Natural killer cell (primary cell): ENCODE measurements at regions of chr6 and their contacts with region 1.

Region 1: GRCh38 chr6:149082286-149082707 is 235.2 kb upstream of the TAB2 start:
- DNase-seq: peak; percentile 46 to 90
- ATAC-seq: peak; percentile 65 to 82 (median 81)
- H3K4me3 ChIP-seq: no peak overlapping the region
- H3K4me3 Mint-ChIP-seq: no peak overlapping the region
- H3K27ac ChIP-seq: no peak overlapping the region
- H3K27ac Mint-ChIP-seq: no peak overlapping the region
- H3K4me1 ChIP-seq: no peaks in the 10 kb centered on the region
- H3K4me1 Mint-ChIP-seq: peaks cover 0 to 4% of the 10 kb centered on the region in 2 donors
- H3K27me3 ChIP-seq: no peaks in the 10 kb centered on the region
- H3K27me3 Mint-ChIP-seq: no peaks in the 10 kb centered on the region
- CTCF ChIP-seq: peak; percentile 78

Region 2: GRCh38 chr6:148831064-148831463 is 251.2 kb before region 1 on chr6:
- intact Hi-C with region 1: no loop called
- DNase-seq: peak; percentile 19 to 67
- ATAC-seq: peak; percentile 75 to 83 (median 75)
- H3K4me3 ChIP-seq: peak overlapping the region; percentile 22
- H3K4me3 Mint-ChIP-seq: peak overlapping the region; percentile 97
- H3K27ac ChIP-seq: peak overlapping the region; percentile 15
- H3K27ac Mint-ChIP-seq: peak overlapping the region; percentile 85 to 96
- H3K4me1 ChIP-seq: peaks cover 26% of the 10 kb centered on the region
- H3K4me1 Mint-ChIP-seq: peaks cover 36 to 53% of the 10 kb centered on the region in 2 donors
- H3K27me3 ChIP-seq: no peaks in the 10 kb centered on the region
- H3K27me3 Mint-ChIP-seq: no peaks in the 10 kb centered on the region
- CTCF ChIP-seq: no peak

Region 3: DNA sequence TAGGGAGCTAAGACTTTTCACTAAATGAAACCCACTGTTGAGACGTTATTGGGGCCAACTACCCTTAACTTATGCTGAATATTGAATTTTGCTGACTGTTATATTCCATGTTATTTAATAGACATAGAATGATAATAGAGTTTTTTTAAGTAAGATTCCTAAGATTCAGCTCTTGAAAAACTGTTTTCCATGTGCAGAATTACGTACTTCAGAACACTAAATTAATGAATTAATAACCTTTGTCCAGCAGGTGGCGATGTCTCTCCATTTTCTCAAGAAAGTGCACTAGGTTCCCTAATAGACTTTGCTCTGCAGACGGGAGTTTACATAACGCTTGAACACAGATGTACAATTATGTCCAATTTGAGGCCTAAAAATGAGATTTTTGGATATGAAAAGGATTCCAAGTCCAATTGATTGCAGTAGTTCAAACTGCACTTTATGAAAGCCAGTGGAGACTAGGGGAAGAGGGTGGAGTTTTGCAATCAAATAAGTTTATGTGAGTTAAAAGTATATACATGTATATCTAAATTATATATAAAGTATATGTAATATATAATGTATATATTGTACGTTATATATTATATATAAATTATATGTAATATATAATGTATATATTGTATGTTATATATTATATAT is 53.4 kb before region 1 on chr6:
- intact Hi-C with region 1: loop called (anchors 5 kb)
- DNase-seq: peak; percentile 34 to 92
- ATAC-seq: peak; percentile 70 to 79 (median 71)
- H3K4me3 ChIP-seq: no peak overlapping the region
- H3K4me3 Mint-ChIP-seq: no peak overlapping the region
- H3K27ac ChIP-seq: no peak overlapping the region
- H3K27ac Mint-ChIP-seq: no peak overlapping the region
- H3K4me1 ChIP-seq: peaks cover 15% of the 10 kb centered on the region
- H3K4me1 Mint-ChIP-seq: peaks cover 5 to 11% of the 10 kb centered on the region in 2 donors
- H3K27me3 ChIP-seq: no peaks in the 10 kb centered on the region
- H3K27me3 Mint-ChIP-seq: no peaks in the 10 kb centered on the region
- CTCF ChIP-seq: peak; percentile 86

Region 4: DNA sequence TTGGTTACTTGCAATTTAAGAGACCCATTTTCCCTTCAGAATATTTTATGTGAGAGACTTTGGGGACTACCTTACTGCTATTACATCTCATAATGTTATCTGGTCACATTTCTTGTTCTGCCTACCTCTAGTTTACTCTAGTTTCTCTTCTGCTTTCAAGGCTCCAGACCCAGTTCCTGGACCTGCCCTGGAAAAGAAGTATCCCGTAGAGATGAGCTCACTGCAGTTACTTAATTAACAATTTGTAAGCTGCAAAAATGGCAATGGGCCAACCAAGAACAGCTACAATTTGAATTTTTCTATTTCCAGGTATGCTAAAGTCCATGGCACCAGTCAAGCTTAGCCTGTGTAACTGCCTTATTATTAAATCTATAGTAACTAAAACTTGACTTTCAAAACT is 260.2 kb after region 1 on chr6:
- intact Hi-C with region 1: no loop called
- DNase-seq: no peak
- ATAC-seq: no peak
- H3K4me3 ChIP-seq: no peak overlapping the region
- H3K4me3 Mint-ChIP-seq: no peak overlapping the region
- H3K27ac ChIP-seq: no peak overlapping the region
- H3K27ac Mint-ChIP-seq: peak overlapping the region in 1 of 2 donors; percentile 24
- H3K4me1 ChIP-seq: no peaks in the 10 kb centered on the region
- H3K4me1 Mint-ChIP-seq: peaks cover 60 to 65% of the 10 kb centered on the region in 2 donors
- H3K27me3 ChIP-seq: no peaks in the 10 kb centered on the region
- H3K27me3 Mint-ChIP-seq: no peaks in the 10 kb centered on the region
- CTCF ChIP-seq: no peak

Region 5: DNA sequence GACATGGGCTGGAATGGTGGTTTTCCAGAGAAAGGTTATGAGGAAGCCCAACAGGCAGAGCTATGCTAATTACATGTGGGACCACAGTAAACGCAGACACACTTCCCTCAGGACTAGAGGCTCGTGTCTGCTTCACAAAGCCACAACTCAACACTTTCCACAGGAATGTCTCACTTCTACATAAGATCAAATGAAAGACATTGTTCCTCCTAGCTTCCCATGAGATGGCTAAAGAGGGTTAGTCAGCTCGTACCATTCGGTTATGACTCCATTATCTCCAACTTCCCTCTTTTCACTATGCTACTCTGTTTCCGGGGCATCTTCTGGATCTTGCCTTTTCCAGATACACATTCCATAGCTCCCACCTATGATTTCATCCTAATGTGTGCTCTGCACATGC is 431.6 kb after region 1 on chr6:
- intact Hi-C with region 1: loop called (anchors 1 kb)
- DNase-seq: no peak
- ATAC-seq: no peak
- H3K4me3 ChIP-seq: no peak overlapping the region
- H3K4me3 Mint-ChIP-seq: no peak overlapping the region
- H3K27ac ChIP-seq: no peak overlapping the region
- H3K27ac Mint-ChIP-seq: peak overlapping the region in 1 of 2 donors; percentile 49
- H3K4me1 ChIP-seq: no peaks in the 10 kb centered on the region
- H3K4me1 Mint-ChIP-seq: peaks cover 5 to 6% of the 10 kb centered on the region in 2 donors
- H3K27me3 ChIP-seq: no peaks in the 10 kb centered on the region
- H3K27me3 Mint-ChIP-seq: no peaks in the 10 kb centered on the region
- CTCF ChIP-seq: no peak